Left colon (tissue), 2 donors: ENCODE measurements at regions of chr2 and their contacts with region 1.

Region 1: DNA sequence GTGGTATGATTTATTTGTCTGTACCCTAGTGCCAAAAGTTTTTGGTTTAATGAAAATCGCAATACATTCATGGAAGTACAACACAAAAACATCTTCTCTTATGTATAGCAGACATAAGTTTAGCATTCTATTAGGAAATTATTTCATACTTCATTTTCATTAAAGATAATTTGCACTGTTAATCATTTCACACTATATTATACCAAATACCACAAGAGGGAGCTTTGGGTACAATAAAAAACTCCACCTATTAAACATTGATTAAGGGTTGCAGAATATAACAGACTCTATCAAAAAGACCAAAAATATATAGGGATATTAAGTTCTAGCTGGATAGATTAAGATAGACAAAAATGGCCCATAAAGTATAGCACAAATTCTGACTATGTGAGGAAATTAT is 79.0 kb downstream of the SLC66A3 start:
- DNase-seq: no peak
- ATAC-seq: peak; percentile 28

Region 2: DNA sequence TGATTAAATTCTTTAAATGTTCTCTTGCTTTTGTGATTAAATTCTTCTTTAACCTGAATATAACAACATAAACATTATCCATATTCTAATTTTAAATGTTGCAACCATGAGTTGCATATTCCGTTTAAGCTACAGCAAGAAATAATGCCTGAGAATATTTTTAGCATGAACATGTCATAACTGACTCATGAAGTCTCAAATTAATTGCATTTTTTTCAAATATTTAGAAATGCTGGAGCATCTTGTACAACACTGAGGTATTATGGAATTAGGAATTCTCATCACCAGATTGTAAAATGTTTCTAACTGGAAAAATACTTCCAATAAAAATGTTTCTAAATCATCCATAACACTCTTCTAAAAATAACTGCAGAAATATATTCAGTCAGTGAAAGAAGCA is 95.5 kb after region 1 on chr2:
- intact Hi-C with region 1: loop called in 1 of 2 experiments (anchors 10 kb)
- DNase-seq: no peak
- ATAC-seq: no peak

Region 3: GRCh38 chr2:11411768-11412448 is 177.6 kb after region 1 on chr2:
- intact Hi-C with region 1: loop called in 1 of 2 experiments (anchors 5 kb)
- DNase-seq: peak in 1 of 2 donors; percentile 67
- ATAC-seq: peak; percentile 70

Region 4: GRCh38 chr2:11753886-11754699 is 519.8 kb after region 1 on chr2:
- intact Hi-C with region 1: no loop called
- DNase-seq: peak; percentile 46 to 69
- ATAC-seq: peak; percentile 59